Ascending aorta (tissue), 2 donors: ENCODE measurements at regions of chr11 and their contacts with region 1.

Region 1: GRCh38 chr11:27472398-27473016 is at the start of gene LGR4:
- DNase-seq: peak; percentile 82 to 97
- H3K4me3 ChIP-seq: peak within 1 kb of the TSS; percentile 98 to 99
- H3K27ac ChIP-seq: peak within 1 kb of the TSS; percentile 70 to 92
- H3K4me1 ChIP-seq: peaks cover 0 to 14% of the 10 kb centered on the region in 2 donors
- H3K27me3 ChIP-seq: no peaks in the 10 kb centered on the region
- CTCF ChIP-seq: no peak
- total RNA-seq, gene LGR4: 46.8 TPM

Region 2: DNA sequence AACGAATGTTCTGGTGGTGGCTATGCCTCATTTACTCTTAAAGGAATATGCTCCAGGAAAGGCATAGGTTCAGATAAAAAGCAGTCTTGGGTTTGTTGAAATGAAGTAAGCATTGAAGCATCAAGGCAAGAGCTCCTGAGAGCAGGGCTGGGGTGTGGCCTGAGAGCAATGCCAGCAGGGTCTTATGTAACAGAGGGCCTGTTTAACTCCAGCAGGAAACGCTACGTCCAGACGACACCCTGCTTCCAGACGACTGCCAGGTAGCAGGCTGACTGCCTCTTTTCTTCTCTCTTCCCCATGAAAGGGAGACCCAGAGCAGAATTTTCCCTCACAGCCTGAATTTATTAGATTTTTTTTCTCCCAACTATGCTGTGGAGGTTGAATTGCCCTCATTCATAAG is 623.5 kb before region 1 on chr11:
- intact Hi-C with region 1: loop called (anchors 10 kb)
- DNase-seq: peak in 1 of 2 donors; percentile 68
- H3K4me3 ChIP-seq: no peak overlapping the region
- H3K27ac ChIP-seq: peak overlapping the region; percentile 94 to 96
- H3K4me1 ChIP-seq: peaks cover 3 to 49% of the 10 kb centered on the region in 2 donors
- H3K27me3 ChIP-seq: no peaks in the 10 kb centered on the region
- CTCF ChIP-seq: no peak

Region 3: DNA sequence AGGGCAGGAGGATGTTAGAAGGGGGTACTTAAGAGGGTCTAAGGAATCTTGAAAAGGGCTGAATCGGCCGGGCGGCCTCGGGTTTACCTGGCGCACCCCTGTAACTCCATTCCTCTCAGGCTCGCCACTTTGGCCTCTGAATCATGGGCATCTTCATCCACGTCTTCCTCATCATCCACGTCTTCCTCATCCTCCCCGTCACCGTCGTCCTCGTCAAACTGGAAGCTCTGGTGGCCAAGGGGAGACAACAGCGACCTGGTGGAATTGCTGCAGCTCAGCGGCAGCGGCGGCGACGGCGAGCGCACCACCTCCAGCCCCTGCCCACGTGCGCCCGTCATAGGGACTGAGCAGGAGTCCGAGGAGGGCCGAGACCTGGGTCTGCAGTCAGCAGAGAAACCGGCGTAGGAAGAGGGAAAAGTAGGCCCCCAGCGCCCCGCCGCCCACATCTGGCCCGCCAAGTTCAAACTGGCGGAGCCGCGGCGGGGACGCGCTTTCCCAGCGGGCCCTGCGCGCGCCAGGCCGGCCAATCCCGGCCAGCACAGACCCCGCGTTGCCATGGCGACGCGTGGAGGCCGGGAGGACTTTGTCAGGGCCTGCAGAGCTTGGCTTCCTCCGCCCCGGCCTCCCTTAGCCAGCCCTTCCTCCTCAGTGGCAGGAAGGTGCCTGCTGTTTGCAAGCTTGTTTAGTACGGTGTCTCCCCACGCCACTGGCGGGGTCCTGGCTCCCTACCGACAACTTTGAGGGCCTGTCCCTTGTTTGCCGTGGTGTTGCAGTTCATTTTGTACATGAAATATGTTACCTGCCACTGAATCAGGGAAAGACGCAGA is 109.5 kb before region 1 on chr11 and contains the start of gene CCDC34:
- intact Hi-C with region 1: loop called (anchors 5 kb)
- DNase-seq: peak; percentile 63 to 92
- H3K4me3 ChIP-seq: peak within 1 kb of the TSS; percentile 69 to 86
- H3K27ac ChIP-seq: peak within 1 kb of the TSS in 1 of 2 donors; percentile 17
- H3K4me1 ChIP-seq: peaks cover 0 to 6% of the 10 kb centered on the region in 2 donors
- H3K27me3 ChIP-seq: no peaks in the 10 kb centered on the region
- CTCF ChIP-seq: no peak
- total RNA-seq, gene CCDC34: 1.6 TPM

Region 4: GRCh38 chr11:27385245-27385644 is 87.3 kb before region 1 on chr11:
- intact Hi-C with region 1: loop called (anchors 2 kb)
- DNase-seq: peak in 1 of 2 donors; percentile 77
- H3K4me3 ChIP-seq: peak overlapping the region; percentile 33 to 36
- H3K27ac ChIP-seq: peak overlapping the region; percentile 39 to 55
- H3K4me1 ChIP-seq: peaks cover 0 to 18% of the 10 kb centered on the region in 2 donors
- H3K27me3 ChIP-seq: no peaks in the 10 kb centered on the region
- CTCF ChIP-seq: no peak

Region 5: GRCh38 chr11:27406498-27407354 is 65.8 kb before region 1 on chr11:
- intact Hi-C with region 1: loop called (anchors 5 kb)
- DNase-seq: no peak
- H3K4me3 ChIP-seq: no peak overlapping the region
- H3K27ac ChIP-seq: peak overlapping the region; percentile 7 to 19
- H3K4me1 ChIP-seq: peaks cover 4 to 30% of the 10 kb centered on the region in 2 donors
- H3K27me3 ChIP-seq: no peaks in the 10 kb centered on the region
- CTCF ChIP-seq: no peak

Region 6: DNA sequence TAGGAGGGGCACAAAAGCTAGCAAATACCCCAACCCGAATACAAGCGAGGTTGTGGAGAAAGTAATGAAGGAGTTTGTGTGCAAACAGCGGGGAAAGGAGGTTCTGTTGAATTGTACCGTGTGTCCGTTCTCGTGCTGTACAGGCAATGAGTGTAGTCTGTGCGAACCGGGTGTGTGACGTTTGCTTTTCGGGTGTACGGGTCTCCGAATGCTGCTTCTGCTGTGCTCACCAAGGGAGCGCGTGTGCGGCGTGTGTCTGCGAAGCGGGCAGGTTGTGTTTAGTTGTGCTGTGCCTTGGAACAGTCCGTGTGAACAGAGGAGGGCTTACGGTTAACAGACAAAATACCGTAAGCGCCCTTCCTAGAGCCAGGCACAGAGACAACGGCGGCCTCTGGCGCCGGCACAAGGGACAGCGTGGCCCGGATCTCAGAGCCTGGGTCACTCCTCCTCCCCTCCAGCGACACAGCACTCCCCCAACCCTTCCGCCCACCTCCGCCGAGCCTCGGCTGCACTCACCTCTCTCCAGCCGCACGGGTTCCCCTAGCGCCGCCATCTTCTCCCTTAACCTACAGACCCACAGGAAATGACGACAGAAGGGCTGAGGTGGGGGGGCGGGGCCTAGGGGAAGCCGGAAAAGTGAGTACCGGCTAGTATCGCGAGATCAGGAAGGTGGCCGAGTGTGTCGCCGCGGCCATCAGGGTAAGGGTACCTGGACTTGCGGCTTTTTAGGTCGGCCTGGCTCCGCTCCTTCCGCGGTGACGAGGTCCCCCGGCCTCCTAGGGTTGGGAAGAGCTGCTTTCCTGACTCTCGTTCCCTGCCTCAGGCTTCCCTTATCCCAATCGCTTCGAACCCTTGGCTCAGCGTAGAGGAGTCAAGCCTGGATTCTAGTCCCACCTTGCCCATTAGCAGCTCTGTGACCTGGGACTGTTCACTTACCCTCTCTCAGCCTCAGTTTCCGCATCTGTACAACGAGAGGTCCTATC is 34.0 kb after region 1 on chr11 and contains the start of gene LIN7C:
- intact Hi-C with region 1: loop called (anchors 2 kb)
- DNase-seq: peak; percentile 91 to 98
- H3K4me3 ChIP-seq: peak within 1 kb of the TSS; percentile 87
- H3K27ac ChIP-seq: peak within 1 kb of the TSS; percentile 94
- H3K4me1 ChIP-seq: peaks cover 8 to 10% of the 10 kb centered on the region in 2 donors
- H3K27me3 ChIP-seq: no peaks in the 10 kb centered on the region
- CTCF ChIP-seq: peak in 1 of 3 experiments; percentile 6
- total RNA-seq, gene LIN7C: 15.1 TPM

Region 7: DNA sequence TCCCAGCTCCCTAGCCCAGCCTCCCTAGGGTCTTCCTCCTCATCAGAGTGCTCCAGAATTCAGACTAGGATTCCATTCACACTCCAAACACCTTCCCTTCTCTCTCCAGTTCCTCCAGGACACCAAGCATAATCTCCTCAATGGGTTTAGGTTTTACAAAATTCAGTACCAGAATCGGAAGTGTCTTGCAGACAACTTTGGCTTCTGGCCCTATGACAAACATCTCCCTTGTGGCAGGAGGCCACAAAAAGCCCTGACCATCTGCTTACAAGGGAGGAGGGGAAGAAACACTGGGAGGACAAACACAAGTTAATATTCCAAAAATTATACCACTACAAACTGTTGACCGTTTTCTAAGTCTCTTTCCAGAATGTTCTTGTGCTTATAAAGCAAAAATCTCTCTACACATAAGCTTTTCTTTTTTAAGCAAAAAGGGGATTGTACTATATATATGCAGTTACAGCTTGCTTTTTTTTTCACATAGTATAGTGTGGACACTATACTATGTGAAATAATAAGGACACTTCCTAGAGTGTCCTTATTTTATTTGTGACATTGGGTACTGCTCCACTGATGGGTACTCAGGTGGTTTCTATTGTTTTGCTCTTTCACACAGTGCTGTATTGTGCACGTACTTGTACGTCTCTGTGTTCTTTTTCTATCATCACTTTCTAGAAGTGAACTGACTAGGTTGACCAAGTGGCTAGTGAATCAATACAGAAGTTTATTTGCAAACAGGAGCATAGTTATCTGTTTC is 149.1 kb after region 1 on chr11:
- intact Hi-C with region 1: no loop called
- DNase-seq: no peak
- H3K4me3 ChIP-seq: no peak overlapping the region
- H3K27ac ChIP-seq: no peak overlapping the region
- H3K4me1 ChIP-seq: no peaks in the 10 kb centered on the region
- H3K27me3 ChIP-seq: no peaks in the 10 kb centered on the region
- CTCF ChIP-seq: no peak